Left cardiac atrium (tissue), 4 donors: ENCODE measurements at regions of chr17 and their contacts with region 1.

Region 1: DNA sequence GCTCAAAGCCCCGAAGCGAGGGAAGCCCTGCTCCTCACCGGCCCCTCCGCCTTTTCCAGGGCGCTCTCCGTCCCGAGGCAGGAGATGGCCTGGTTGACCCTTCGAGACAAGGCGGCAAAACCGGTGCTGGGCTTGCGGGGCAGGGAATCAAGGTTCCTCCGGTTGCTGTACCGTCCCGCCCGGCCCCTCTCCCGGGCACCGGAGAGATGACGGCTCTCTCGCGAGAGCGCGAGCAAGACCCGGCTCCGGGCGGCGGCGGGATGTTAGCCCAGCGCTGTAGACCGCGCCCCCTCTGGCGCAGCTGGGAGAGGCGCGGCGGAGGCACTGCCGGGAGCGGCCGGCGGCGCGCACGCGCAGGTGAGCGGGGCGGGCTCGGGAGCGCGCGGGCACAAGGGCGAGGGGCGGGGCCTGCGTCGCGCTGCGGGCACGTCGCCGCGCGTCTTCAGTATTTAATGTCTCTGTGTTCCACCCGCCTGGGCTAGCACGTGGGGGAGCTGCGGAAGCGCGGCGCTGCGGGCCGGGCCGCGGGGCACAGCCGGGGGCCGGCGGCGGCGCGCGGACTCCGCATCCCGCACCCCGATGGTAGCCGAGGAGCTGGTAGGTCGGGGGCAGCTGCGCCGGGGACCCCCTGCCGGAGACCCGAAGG is at the start of gene AKAP1:
- DNase-seq: peak; percentile 97
- ATAC-seq: peak; percentile 93 to 95
- total RNA-seq, gene AKAP1: 86.3 to 131 TPM

Region 2: DNA sequence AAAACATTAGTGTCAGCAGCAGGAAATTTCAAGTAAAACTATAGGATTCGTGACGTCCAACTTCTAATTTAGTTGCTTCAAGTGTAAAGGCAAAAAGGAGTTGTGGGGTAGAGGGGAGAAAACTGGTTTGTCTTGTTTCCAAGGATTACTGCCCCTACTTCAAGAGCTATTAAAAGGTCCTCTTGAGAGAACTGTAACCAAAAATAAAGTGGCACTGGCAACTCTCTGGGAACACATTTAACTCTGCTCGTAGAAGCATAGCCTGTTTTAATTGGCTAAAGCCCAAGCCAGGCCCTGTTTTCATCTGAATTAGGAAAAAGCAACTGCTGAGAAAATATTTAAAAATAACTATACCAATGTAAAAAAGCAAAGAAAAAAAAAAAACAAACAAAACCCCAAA is 51.6 kb before region 1 on chr17:
- intact Hi-C with region 1: loop called in 1 of 2 experiments (anchors 10 kb)
- DNase-seq: no peak
- ATAC-seq: peak; percentile 80 to 85

Region 3: DNA sequence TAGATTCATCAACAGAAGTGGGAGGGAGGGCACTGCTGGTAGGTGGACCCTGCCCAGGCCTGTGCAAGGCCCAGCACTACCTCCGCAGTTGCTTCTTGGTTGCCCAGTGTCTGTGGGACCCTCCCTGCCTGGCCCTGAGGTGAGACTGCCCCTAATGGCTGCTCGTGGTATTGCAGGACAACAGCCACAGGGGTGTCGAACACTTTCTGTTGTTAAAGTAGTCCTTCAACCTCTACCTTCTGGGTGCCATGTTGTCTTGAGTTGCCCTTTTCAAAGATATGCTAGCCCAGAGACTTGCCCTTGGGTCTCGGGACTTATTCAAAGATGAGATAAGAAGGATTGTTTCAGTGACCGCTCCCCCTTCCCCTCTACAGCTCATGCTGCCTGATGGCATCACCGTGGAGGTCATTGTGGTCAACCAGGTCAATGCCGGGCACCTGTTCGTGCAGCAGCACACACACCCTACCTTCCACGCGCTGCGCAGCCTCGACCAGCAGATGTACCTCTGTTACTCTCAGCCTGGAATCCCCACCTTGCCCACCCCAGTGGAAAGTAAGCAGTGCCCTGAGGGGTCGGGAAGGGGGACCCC is 29.3 kb after region 1 on chr17:
- intact Hi-C with region 1: loop called in 1 of 2 experiments (anchors 2 kb)
- DNase-seq: peak; percentile 51
- ATAC-seq: peak in 1 of 2 donors; percentile 10